ENCODE measurements at regions of chr3 and their contacts with region 1.

Region 1: GRCh38 chr3:156674046-156674910 is at the start of gene TIPARP:
- ATAC-seq: peak; percentile 72 to 93 (median 91)
- H3K4me3 ChIP-seq: peak within 1 kb of the TSS; percentile 51 to 85 (median 60)
- H3K27ac ChIP-seq: peak within 1 kb of the TSS; percentile 64 to 80
- H3K4me1 ChIP-seq: peaks cover 6% of the 10 kb centered on the region in 2 donors
- total RNA-seq, gene TIPARP: 8.0 to 28.4 (median 14.6) TPM

Region 2: DNA sequence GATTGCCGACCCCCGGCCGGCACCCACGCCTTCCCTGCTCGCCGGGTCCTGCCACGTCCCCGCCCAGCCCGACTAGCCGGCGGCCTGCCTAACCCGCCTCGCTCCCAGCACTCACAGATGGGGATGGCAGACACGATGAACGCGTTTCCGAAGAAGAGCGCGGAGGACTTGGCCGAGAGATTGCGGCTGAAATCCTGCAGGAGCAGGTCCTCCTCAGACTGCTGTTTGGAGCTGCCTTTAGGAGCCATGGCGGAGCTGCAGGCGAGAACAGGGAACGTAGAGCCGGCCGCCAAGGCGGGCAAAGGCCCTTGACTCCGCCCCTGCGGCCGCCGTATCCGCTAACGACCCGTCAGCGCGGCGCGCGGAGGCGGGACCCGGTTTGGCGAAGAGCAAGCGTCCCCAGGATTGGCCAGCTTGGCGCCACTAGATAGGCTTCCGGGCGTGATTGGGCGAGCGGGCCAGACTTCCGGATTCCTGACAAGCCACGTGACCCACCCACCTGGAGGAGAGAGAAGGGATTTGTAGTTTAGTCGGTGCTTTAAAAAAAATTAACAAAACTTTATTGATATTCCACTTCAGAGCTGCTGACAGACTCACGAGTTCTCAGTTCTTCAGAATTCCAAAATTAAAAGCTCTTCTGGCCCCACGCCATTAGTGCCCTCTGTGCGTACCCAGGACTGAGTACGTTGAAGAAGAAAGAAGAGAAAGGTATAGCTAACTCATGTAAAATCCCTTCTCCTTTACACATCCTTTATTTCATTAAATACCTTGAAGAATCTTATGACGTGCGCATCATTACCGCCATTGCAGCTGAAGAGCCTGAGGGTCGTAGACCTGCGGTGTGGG is 119.2 kb before region 1 on chr3 and contains the start of gene SSR3:
- in situ Hi-C with region 1: loop called in 2 of 9 experiments (anchors 25 kb)
- ATAC-seq: peak; percentile 96 to 100 (median 99)
- H3K4me3 ChIP-seq: peak within 1 kb of the TSS; percentile 44 to 85 (median 71)
- H3K27ac ChIP-seq: peak within 1 kb of the TSS; percentile 82 to 93
- H3K4me1 ChIP-seq: peaks cover 8 to 9% of the 10 kb centered on the region in 2 donors
- total RNA-seq, gene SSR3: 62.6 to 195 (median 88.0) TPM

Region 3: GRCh38 chr3:157819270-157820156 is 1145.2 kb after region 1 on chr3:
- in situ Hi-C with region 1: no loop called
- ATAC-seq: peak in 2 of 8 experiments; percentile 35 to 41
- H3K4me3 ChIP-seq: no peak overlapping the region
- H3K27ac ChIP-seq: no peak overlapping the region
- H3K4me1 ChIP-seq: peaks cover 3 to 5% of the 10 kb centered on the region in 2 donors

Measured in motor neuron (in vitro differentiated cells).